Activated T-helper 2 cell treated with anti-CD3 and anti-CD28 coated beads, Interferon-gamma antibody, Interleukin-2, Interleukin-4, amounts not matched to agents 10 μg/mL and 5 μg/mL and 100 μg/mL, durations not matched to agents 14 hours and 24 hours and 36 hours (primary cell): ENCODE measurements at regions of chr1 and their contacts with region 1.

Region 1: GRCh38 chr1:15384301-15384901 is 25.3 kb upstream of the EFHD2 start:
- DNase-seq: no peak
- H3K4me3 Mint-ChIP-seq: no peak overlapping the region
- H3K27ac Mint-ChIP-seq: no peak overlapping the region
- H3K4me1 Mint-ChIP-seq: peaks cover 10% of the 10 kb centered on the region
- H3K27me3 Mint-ChIP-seq: peaks cover 47% of the 10 kb centered on the region

Region 2: GRCh38 chr1:15323351-15323988 is 60.9 kb before region 1 on chr1:
- intact Hi-C with region 1: no loop called
- DNase-seq: peak; percentile 61
- H3K4me3 Mint-ChIP-seq: no peak overlapping the region
- H3K27ac Mint-ChIP-seq: no peak overlapping the region
- H3K4me1 Mint-ChIP-seq: peaks cover 5% of the 10 kb centered on the region
- H3K27me3 Mint-ChIP-seq: peaks cover 17% of the 10 kb centered on the region

Region 3: GRCh38 chr1:15364740-15365139 is 19.7 kb before region 1 on chr1:
- intact Hi-C with region 1: loop called (anchors 2 kb)
- DNase-seq: no peak
- H3K4me3 Mint-ChIP-seq: no peak overlapping the region
- H3K27ac Mint-ChIP-seq: no peak overlapping the region
- H3K4me1 Mint-ChIP-seq: no peaks in the 10 kb centered on the region
- H3K27me3 Mint-ChIP-seq: peaks cover 8% of the 10 kb centered on the region